ENCODE measurements at regions of chr6 and their contacts with region 1.

Region 1: DNA sequence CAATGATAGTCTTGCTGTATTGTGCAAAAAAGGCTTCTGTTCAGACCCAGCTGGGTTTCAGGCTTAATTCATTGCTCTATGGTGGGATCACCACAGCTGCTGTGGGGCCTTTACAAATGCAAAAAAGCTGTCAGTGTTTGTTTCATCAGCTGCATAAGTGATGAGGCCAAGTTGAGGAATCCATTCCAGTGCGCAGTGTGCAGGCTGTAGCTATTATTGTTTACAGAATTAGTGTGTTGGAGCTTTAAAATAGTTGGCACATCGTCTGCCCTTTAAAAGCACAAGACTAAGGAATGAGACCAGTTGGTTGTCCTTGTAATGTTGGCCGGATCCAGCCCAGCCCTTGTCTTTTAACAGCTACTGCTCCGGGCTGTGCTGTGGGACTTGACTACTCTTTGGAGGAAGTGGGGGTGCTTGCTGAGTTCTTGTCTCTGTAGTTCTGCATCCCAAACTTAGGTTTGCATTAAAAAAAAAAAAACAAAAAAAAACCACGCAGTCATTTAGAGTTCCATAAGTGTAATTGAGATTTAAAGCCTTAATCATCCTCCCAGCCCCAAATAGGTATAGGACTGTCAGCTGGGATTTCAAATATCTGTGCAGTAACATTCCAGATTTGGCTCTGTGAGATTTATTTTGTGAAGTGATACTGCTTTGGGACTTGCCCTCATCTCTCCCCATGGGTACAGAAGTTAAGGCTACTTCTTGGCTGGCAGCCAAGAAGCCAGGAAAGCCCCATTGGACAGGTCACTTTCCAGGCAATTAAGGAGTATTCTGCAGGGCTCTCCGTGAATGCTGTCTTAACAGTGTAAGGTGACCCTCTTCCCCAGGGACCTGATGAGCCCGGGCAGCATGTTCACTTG is 19.3 kb downstream of the JARID2 start:
- DNase-seq: no peak
- H3K4me3 Mint-ChIP-seq: no peak overlapping the region
- H3K27ac Mint-ChIP-seq: peak overlapping the region; percentile 31
- H3K4me1 Mint-ChIP-seq: peaks cover 88% of the 10 kb centered on the region
- H3K27me3 Mint-ChIP-seq: no peaks in the 10 kb centered on the region

Region 2: GRCh38 chr6:15248451-15249370 is 16.4 kb before region 1 on chr6:
- CTCF ChIA-PET with region 1: interaction called, 20 read pairs
- POLR2A ChIA-PET with region 1: no interaction called
- DNase-seq: peak; percentile 98
- H3K4me3 Mint-ChIP-seq: peak overlapping the region; percentile 99
- H3K27ac Mint-ChIP-seq: peak overlapping the region; percentile 100
- H3K4me1 Mint-ChIP-seq: peaks cover 56% of the 10 kb centered on the region
- H3K27me3 Mint-ChIP-seq: no peaks in the 10 kb centered on the region

Region 3: DNA sequence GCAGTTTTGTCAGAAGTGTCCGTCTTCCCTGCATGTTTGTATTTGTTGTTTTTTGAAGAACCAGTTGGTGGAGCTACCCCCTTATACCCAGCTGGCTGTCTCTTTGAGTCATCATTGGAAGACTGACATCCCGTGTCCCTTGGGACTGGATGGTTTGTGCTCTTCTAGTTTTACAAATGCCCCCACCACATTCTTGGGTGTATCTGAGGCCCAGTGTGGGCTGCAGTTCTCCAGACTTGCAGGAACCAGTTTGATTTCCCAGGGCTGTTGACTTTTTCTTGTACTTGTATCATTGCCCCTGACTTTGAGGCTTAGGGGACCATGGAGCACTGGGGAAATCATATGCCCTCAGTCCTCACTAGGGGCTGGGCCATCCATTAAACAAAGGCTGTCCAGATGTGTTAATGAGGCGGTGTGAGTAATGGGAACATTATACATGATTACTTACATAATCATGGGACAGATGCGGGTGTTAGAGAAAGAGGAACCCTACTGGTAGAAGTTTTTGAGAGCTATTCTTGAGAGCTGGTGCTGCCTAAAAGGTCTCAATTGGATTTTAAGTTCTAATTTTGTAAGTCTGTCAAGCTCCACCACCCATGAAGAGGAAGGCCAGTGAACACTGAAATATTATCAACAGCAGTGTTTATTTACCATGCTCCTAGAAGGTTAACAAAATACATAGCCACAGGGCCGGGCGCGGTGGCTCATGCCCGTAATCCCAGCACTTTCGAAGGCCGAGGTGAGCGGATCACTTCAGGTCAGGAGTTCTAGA is 10.9 kb before region 1 on chr6:
- CTCF ChIA-PET with region 1: interaction called, 20 read pairs
- POLR2A ChIA-PET with region 1: no interaction called
- DNase-seq: no peak
- H3K4me3 Mint-ChIP-seq: peak overlapping the region; percentile 99
- H3K27ac Mint-ChIP-seq: peak overlapping the region; percentile 100
- H3K4me1 Mint-ChIP-seq: peaks cover 97% of the 10 kb centered on the region
- H3K27me3 Mint-ChIP-seq: no peaks in the 10 kb centered on the region

Measured in activated CD4-positive, alpha-beta T cell treated with anti-CD3 and anti-CD28 coated beads, Interleukin-2, amount 10 ng/mL, durations not matched to agents 7 days and 5 days (primary cell).